Spleen (tissue), 13 donors: ENCODE measurements at regions of chr5 and their contacts with region 1.

Region 1: GRCh38 chr5:170420780-170421412 is 31.7 kb upstream of the KCNMB1 start:
- DNase-seq: peak; percentile 58
- H3K4me3 ChIP-seq: no peak overlapping the region
- H3K27ac ChIP-seq: no peak overlapping the region
- H3K4me1 ChIP-seq: peaks cover 0 to 34% (median 16%) of the 10 kb centered on the region in 6 donors
- H3K27me3 ChIP-seq: no peaks in the 10 kb centered on the region
- CTCF ChIP-seq: peak; percentile 51 to 83 (median 76)
- POLR2A ChIP-seq: no peak

Region 2: DNA sequence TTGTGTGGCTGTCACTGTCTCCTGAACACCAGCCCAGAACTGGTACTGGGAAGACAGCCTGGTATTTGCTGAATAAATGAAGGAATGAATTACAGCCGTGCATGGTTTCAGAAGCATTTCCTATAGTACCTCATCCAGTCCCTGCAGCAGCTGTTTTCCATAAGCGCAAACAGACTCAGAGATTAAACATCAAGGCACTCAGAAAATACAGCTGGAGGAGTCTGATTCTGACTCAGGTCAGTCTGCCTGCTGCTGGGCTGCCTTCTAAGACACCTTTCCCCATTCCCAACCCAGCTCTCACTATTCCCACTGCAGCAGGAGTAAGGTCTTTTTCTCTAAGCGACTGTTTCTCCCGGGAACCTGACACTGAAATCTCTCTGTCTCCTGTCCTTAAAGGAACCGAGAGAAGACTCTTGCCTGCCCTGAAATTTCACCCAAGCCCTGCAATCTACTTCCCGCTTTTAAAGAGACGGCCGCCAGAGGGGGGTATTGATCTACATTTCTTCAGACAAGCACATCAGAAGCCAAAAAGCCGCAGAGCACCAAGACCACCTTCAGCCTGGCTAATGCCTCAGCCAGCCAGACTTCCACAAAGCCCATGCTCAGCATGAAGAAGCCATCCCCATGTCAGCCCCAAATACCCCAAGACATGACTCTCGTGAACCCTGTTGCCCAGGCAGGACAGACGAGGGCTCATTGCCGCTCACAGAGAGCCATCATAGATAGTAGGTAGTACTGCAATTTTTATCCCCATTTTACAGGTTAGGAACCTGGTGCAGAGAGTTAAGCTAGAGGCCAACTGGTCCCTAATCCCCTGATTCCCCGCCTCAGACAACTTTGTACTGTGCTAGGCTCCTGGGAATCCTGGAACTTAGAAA is 320.6 kb before region 1 on chr5:
- intact Hi-C with region 1: loop called (anchors 5 kb)
- DNase-seq: peak; percentile 80
- H3K4me3 ChIP-seq: no peak overlapping the region
- H3K27ac ChIP-seq: no peak overlapping the region
- H3K4me1 ChIP-seq: peaks cover 8 to 42% (median 28%) of the 10 kb centered on the region in 6 donors
- H3K27me3 ChIP-seq: no peaks in the 10 kb centered on the region
- CTCF ChIP-seq: peak; percentile 51 to 82 (median 70)
- POLR2A ChIP-seq: no peak

Region 3: GRCh38 chr5:170190436-170191134 is 230.3 kb before region 1 on chr5:
- intact Hi-C with region 1: no loop called
- DNase-seq: no peak
- H3K4me3 ChIP-seq: no peak overlapping the region
- H3K27ac ChIP-seq: no peak overlapping the region
- H3K4me1 ChIP-seq: no peaks in the 10 kb centered on the region
- H3K27me3 ChIP-seq: no peaks in the 10 kb centered on the region
- CTCF ChIP-seq: no peak
- POLR2A ChIP-seq: no peak

Region 4: GRCh38 chr5:170221327-170221741 is 199.6 kb before region 1 on chr5:
- intact Hi-C with region 1: loop called (anchors 5 kb)
- DNase-seq: no peak
- H3K4me3 ChIP-seq: no peak overlapping the region
- H3K27ac ChIP-seq: peak overlapping the region in 4 of 8 donors; percentile 5 to 54 (median 42)
- H3K4me1 ChIP-seq: peaks cover 0 to 26% (median 5%) of the 10 kb centered on the region in 6 donors
- H3K27me3 ChIP-seq: no peaks in the 10 kb centered on the region
- CTCF ChIP-seq: peak in 1 of 11 experiments; percentile 9
- POLR2A ChIP-seq: no peak

Region 5: GRCh38 chr5:170267431-170268152 is 153.3 kb before region 1 on chr5:
- intact Hi-C with region 1: loop called (anchors 5 kb)
- DNase-seq: peak; percentile 91
- H3K4me3 ChIP-seq: peak overlapping the region in 2 of 8 donors; percentile 10 to 42
- H3K27ac ChIP-seq: peak overlapping the region; percentile 48 to 99 (median 85)
- H3K4me1 ChIP-seq: peaks cover 42 to 100% (median 76%) of the 10 kb centered on the region in 6 donors
- H3K27me3 ChIP-seq: peaks cover 0 to 10% (median 0%) of the 10 kb centered on the region in 7 donors
- CTCF ChIP-seq: peak; percentile 70 to 92 (median 87)
- POLR2A ChIP-seq: no peak

Region 6: DNA sequence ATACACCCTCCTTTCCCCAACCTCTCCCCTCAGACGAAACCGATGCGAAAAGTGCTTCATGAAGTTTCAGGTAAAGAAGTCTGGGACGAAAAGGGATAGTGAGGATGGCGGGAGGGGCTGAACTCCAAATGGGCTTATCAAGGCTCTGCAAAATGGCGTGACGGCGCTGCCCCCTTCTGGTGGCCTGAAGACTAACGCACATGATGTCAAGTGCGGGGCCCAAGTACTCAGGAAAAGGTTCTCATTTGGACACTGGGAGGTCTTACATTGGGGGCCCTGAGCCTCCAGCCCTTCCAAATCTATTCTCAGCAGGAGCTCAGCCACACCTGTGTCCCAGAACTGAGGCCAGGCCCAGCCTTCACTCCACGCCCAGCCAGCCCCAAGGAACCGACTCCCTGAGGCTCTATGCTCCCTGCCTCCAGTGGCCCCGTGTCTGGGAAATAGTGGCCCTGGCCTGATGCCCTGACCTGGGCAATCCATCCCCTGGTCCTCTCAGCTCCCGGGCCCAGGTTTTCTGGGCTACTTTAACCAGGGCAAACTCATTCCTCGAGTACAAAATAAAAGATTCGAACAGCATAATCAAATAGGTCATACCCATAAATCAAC is 202.8 kb after region 1 on chr5:
- intact Hi-C with region 1: no loop called
- DNase-seq: peak; percentile 78
- H3K4me3 ChIP-seq: no peak overlapping the region
- H3K27ac ChIP-seq: no peak overlapping the region
- H3K4me1 ChIP-seq: no peaks in the 10 kb centered on the region
- H3K27me3 ChIP-seq: peaks cover 0 to 18% (median 0%) of the 10 kb centered on the region in 7 donors
- CTCF ChIP-seq: peak in 7 of 11 experiments; percentile 34 to 55 (median 44)
- POLR2A ChIP-seq: no peak